Mammary epithelial cell (primary cell): ENCODE measurements at regions of chr7 and their contacts with region 1.

Region 1: DNA sequence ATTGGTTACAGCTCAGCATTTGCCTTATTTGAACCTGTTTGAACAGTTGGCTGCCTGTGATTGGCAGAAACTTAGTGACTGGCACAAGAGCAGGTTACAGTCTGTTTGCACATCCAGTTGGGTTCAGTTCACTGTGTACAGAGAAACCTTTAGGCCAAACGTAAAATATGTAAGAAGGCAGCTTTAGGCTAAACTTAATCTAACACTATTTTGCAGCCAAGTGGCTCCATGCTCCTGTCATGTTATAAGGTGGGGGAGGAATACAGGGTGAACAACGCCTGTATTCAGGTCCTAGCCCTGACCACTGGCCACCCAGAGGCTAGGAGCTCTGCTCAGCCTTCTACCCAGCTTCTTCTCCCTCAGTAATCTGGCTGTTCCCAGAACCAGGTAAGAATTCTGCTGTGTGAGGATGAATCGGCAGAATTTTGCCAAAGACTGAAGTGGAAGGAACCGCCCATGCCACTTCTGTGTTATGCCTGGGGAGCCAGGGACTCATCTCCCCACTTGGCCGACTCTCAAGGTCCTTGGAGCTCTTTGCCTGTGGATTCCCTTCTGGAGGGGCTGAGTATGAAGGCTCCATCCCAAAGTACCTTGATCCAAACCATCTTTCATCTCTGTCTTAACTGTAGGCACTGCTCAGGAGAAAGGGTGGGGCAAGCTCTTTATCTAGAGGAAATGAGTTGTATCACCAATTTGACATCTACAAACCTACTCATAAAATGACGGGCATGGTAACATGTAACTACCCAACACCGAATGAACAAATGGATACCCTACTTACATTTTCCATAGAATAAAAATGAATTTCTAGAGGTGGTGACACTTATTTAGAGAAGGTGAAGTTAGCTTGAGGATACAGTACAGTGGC is 164.4 kb upstream of the NAMPT start:
- DNase-seq: no peak
- H3K4me3 ChIP-seq: no peak overlapping the region
- H3K27ac ChIP-seq: no peak overlapping the region
- H3K4me1 ChIP-seq: peaks cover 15% of the 10 kb centered on the region
- H3K27me3 ChIP-seq: no peaks in the 10 kb centered on the region
- CTCF ChIP-seq: no peak

Region 2: DNA sequence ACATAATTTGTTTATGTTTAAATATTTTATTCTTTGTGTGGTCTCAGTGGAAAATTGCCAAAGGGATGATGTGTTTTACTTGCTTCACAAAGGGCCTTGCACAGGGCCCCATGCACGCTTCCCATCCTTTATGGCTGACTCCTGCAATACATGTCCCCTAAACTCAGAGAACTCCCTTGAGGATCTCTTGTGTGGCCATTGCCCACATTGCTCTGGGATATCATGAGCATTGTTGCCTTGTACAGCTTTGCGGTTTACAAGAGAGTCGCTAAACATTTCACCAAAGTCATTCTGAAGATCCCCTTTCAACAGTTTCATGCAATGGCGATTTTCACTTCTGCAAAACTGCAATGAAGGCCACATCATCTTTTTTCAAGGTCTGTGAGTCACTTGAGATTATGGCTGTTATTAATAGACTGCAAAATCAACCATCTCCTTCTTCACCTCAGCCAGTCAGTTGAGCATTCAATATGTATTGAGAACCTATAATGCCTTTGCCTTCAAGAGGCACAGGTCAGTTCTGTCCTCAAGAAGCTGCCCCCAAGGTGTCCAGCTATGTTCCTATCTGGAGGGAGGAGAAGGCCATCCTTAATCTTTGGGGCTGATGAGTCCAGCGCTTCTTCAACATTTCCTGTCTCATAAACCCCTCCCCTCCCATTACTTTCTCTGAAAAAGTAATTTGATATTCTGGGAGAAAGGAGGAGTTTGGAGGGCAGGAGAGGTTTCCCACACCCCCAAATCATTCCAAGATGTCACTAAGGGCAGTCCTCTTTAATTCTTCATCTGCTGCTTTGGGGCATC is 103.6 kb after region 1 on chr7:
- CTCF ChIA-PET with region 1: no interaction called
- dilution Hi-C with region 1: loop called (anchors 5 kb)
- in situ Hi-C with region 1: no loop called
- intact Hi-C with region 1: no loop called
- DNase-seq: no peak
- H3K4me3 ChIP-seq: no peak overlapping the region
- H3K27ac ChIP-seq: no peak overlapping the region
- H3K4me1 ChIP-seq: no peaks in the 10 kb centered on the region
- H3K27me3 ChIP-seq: no peaks in the 10 kb centered on the region
- CTCF ChIP-seq: no peak